HepG2 (cell line): ENCODE measurements at regions of chr2 and their contacts with region 1.

Region 1: DNA sequence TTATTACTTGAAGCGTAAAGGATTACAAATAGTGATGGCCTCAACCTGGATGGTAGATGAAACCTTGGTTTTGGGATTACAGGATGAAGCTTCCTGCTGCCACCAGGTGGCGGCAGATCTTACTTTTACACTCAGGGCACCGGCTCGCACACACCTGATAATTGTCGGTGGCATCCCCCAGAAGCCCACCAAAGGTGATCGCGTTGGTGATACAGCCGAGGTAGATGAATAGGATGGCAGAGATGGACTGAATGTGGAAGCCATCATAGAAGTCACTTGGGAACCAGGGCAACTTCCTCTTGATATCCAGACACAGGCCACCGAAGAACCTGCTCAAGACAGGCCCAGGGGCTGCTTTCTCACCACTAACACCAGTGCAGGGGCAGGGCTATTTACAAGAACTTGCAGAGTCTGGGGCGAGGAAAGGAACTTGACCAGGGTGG is 51.8 kb downstream of the MTHFD2 start:
- DNase-seq: peak; percentile 41
- ATAC-seq: peak; percentile 83
- H3K4me3 ChIP-seq: no peak overlapping the region
- H3K27ac ChIP-seq: no peak overlapping the region
- H3K4me1 ChIP-seq: no peaks in the 10 kb centered on the region
- H3K27me3 ChIP-seq: peaks cover 2 to 15% of the 10 kb centered on the region in 2 experiments; a peak in 1 of 5 replicates
- CTCF ChIP-seq: peak; percentile 88
- EP300 ChIP-seq: no peak
- POLR2A ChIP-seq: no peak
- RAD21 ChIP-seq: no peak; the same call in 1 of the 2 replicates

Region 2: DNA sequence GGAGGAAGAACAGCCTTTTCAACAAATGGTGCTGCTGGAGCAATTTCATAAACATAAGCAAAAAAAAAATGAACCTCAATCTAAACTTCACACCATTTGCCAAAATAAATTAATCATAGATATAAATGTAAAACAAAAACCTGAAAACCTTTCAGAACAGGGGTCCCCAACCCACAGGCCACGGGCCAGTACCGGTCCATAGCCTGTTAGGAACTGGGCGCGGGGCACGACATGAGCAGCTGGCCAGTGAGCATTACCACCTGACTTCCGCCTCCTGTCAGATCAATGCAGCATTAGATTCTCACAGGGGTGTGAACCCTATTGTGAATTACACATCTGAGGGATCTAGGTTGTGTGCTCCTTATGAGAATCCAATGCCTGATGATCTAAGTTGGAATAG is 1600.4 kb before region 1 on chr2:
- CTCF ChIA-PET with region 1: no interaction called
- POLR2A ChIA-PET with region 1: no interaction called
- in situ Hi-C with region 1: no loop called
- intact Hi-C with region 1: no loop called
- DNase-seq: no peak
- ATAC-seq: no peak
- H3K4me3 ChIP-seq: no peak overlapping the region
- H3K27ac ChIP-seq: no peak overlapping the region
- H3K4me1 ChIP-seq: no peaks in the 10 kb centered on the region
- H3K27me3 ChIP-seq: no peaks in the 10 kb centered on the region
- CTCF ChIP-seq: no peak
- EP300 ChIP-seq: no peak
- POLR2A ChIP-seq: no peak
- RAD21 ChIP-seq: no peak

Region 3: DNA sequence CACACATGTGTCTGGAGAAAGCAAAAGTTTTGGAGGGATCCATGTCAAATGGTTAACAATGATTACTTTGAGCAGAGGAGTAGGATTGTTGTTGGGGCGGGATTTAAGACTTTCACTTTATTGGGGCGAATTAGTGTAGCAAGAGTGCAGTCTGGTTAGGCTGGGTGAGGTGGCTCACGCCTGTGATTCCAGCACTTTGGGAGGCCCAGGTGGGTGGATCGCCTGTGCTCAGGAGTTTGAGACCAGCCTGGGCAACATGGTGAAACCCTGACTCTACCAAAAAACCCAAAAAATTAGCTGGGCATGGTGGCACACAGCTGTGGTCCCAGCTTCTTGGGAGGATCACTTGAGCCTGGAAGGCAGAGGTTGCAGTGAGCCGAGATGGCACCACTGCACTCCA is 17.3 kb after region 1 on chr2:
- CTCF ChIA-PET with region 1: no interaction called
- POLR2A ChIA-PET with region 1: no interaction called
- in situ Hi-C with region 1: no loop called
- intact Hi-C with region 1: no loop called
- DNase-seq: no peak
- ATAC-seq: no peak
- H3K4me3 ChIP-seq: no peak overlapping the region
- H3K27ac ChIP-seq: no peak overlapping the region
- H3K4me1 ChIP-seq: peaks cover 6% of the 10 kb centered on the region
- H3K27me3 ChIP-seq: peaks cover 0 to 2% of the 10 kb centered on the region in 2 experiments; a peak in 3 of 5 replicates
- CTCF ChIP-seq: no peak
- EP300 ChIP-seq: no peak
- POLR2A ChIP-seq: no peak
- RAD21 ChIP-seq: no peak

Region 4: GRCh38 chr2:74399785-74400184 is 149.6 kb after region 1 on chr2:
- CTCF ChIA-PET with region 1: interaction called, 4 read pairs
- POLR2A ChIA-PET with region 1: no interaction called
- in situ Hi-C with region 1: no loop called
- intact Hi-C with region 1: loop called (anchors 1 kb)
- DNase-seq: peak; percentile 41
- ATAC-seq: peak; percentile 70
- H3K4me3 ChIP-seq: no peak overlapping the region
- H3K27ac ChIP-seq: no peak overlapping the region
- H3K4me1 ChIP-seq: 0 out of 2 replicates have a peak, but pooled peaks cover 6% of the 10 kb centered on the region
- H3K27me3 ChIP-seq: no peaks in the 10 kb centered on the region
- CTCF ChIP-seq: peak; percentile 49
- EP300 ChIP-seq: no peak
- POLR2A ChIP-seq: no peak
- RAD21 ChIP-seq: no peak

Region 5: GRCh38 chr2:74587664-74588277 is 337.6 kb after region 1 on chr2:
- CTCF ChIA-PET with region 1: interaction called, 6 read pairs
- POLR2A ChIA-PET with region 1: no interaction called
- in situ Hi-C with region 1: no loop called
- intact Hi-C with region 1: loop called (anchors 5 kb)
- DNase-seq: peak; percentile 77
- ATAC-seq: peak; percentile 96
- H3K4me3 ChIP-seq: no peak overlapping the region
- H3K27ac ChIP-seq: no peak overlapping the region
- H3K4me1 ChIP-seq: peaks cover 20% of the 10 kb centered on the region
- H3K27me3 ChIP-seq: peaks cover 0 to 4% of the 10 kb centered on the region in 2 experiments; a peak in 3 of 5 replicates
- CTCF ChIP-seq: peak; percentile 94
- EP300 ChIP-seq: no peak
- POLR2A ChIP-seq: no peak
- RAD21 ChIP-seq: peak; percentile 88